WTC11 (cell line): ENCODE measurements at regions of chr1 and their contacts with region 1.

Region 1: GRCh38 chr1:223556414-223557129 is 108.9 kb downstream of the CAPN8 start:
- DNase-seq: peak; percentile 86
- ATAC-seq: peak; percentile 95
- H3K4me3 Mint-ChIP-seq: no peak overlapping the region
- H3K27ac Mint-ChIP-seq: no peak overlapping the region
- H3K4me1 Mint-ChIP-seq: no peaks in the 10 kb centered on the region
- H3K27me3 Mint-ChIP-seq: no peaks in the 10 kb centered on the region
- CTCF ChIP-seq: peak; percentile 77

Region 2: GRCh38 chr1:223363856-223364684 is 192.5 kb before region 1 on chr1 and contains the start of gene SUSD4:
- CTCF ChIA-PET with region 1: interaction called, 16 read pairs
- POLR2A ChIA-PET with region 1: no interaction called
- DNase-seq: peak; percentile 79
- ATAC-seq: peak; percentile 68
- H3K4me3 Mint-ChIP-seq: peak within 1 kb of the TSS; percentile 88
- H3K27ac Mint-ChIP-seq: no peak within 1 kb of the TSS
- H3K4me1 Mint-ChIP-seq: peaks cover 17% of the 10 kb centered on the region
- H3K27me3 Mint-ChIP-seq: peaks cover 78% of the 10 kb centered on the region
- CTCF ChIP-seq: no peak
- total RNA-seq, gene SUSD4: 1.8 to 2.6 TPM (median 2.6 TPM) in 3 replicates

Region 3: GRCh38 chr1:223531742-223532341 is 24.7 kb before region 1 on chr1:
- CTCF ChIA-PET with region 1: interaction called, 30 read pairs
- POLR2A ChIA-PET with region 1: no interaction called
- DNase-seq: peak; percentile 86
- ATAC-seq: peak; percentile 96
- H3K4me3 Mint-ChIP-seq: no peak overlapping the region
- H3K27ac Mint-ChIP-seq: no peak overlapping the region
- H3K4me1 Mint-ChIP-seq: peaks cover 10% of the 10 kb centered on the region
- H3K27me3 Mint-ChIP-seq: no peaks in the 10 kb centered on the region; the same call in 1 of the 2 replicates
- CTCF ChIP-seq: peak; percentile 62

Region 4: GRCh38 chr1:223611936-223612335 is 55.4 kb after region 1 on chr1:
- CTCF ChIA-PET with region 1: interaction called, 75 read pairs
- POLR2A ChIA-PET with region 1: interaction called, 3 read pairs
- DNase-seq: no peak
- ATAC-seq: no peak
- H3K4me3 Mint-ChIP-seq: no peak overlapping the region
- H3K27ac Mint-ChIP-seq: no peak overlapping the region
- H3K4me1 Mint-ChIP-seq: no peaks in the 10 kb centered on the region
- H3K27me3 Mint-ChIP-seq: no peaks in the 10 kb centered on the region
- CTCF ChIP-seq: no peak

Region 5: GRCh38 chr1:223628233-223629125 is 71.9 kb after region 1 on chr1:
- CTCF ChIA-PET with region 1: interaction called, 18 read pairs
- POLR2A ChIA-PET with region 1: no interaction called
- DNase-seq: peak; percentile 72
- ATAC-seq: peak; percentile 95
- H3K4me3 Mint-ChIP-seq: no peak overlapping the region
- H3K27ac Mint-ChIP-seq: no peak overlapping the region
- H3K4me1 Mint-ChIP-seq: no peaks in the 10 kb centered on the region
- H3K27me3 Mint-ChIP-seq: no peaks in the 10 kb centered on the region
- CTCF ChIP-seq: peak; percentile 89

Region 6: GRCh38 chr1:223659706-223660105 is 103.1 kb after region 1 on chr1:
- CTCF ChIA-PET with region 1: interaction called, 11 read pairs
- POLR2A ChIA-PET with region 1: no interaction called
- DNase-seq: no peak
- ATAC-seq: no peak
- H3K4me3 Mint-ChIP-seq: no peak overlapping the region
- H3K27ac Mint-ChIP-seq: no peak overlapping the region
- H3K4me1 Mint-ChIP-seq: peaks cover 13% of the 10 kb centered on the region
- H3K27me3 Mint-ChIP-seq: no peaks in the 10 kb centered on the region; the same call in 1 of the 2 replicates
- CTCF ChIP-seq: no peak

Region 7: DNA sequence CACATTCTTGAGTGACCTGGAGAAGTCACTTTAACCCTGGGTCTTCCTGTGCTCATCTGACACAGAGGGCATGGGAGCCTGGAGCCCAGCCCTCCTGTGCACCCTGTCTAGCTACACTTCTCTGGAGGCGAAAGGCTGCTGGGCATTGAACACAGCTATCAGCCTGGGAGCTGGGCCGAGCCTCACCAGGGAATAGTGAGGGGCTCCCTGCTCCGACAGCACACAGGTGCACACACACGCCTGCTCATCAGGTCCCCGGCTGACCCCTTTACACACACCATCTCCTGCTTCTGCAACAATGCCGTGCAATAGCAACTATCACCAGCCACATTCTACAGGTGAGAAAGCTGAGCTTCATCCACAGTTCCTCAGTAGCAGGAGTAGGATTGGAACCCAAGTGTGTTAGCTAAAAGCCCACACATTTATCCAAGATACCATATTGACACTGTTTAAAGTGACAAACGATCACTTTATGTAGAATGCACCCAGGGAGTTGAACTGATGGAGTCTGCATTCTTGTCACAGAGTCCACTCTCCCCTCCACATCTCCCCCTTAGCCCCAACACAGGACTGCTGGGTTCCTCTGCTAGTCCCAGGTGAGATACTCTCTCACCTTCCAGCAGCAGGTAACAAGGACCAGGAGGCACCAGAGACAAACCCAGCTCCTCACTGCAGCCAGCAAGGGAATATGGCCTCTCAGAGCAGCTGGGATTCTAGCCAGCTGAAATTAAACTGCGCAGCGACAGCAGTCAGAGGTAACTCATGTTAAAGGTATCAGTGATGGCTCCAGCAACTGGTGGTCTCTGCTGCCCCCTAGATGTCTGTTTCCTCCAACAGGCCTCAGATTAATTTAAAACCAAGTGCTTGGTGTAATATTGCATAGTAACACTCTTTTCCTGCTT is 127.3 kb after region 1 on chr1:
- CTCF ChIA-PET with region 1: interaction called, 70 read pairs
- POLR2A ChIA-PET with region 1: interaction called, 5 read pairs
- DNase-seq: peak; percentile 77
- ATAC-seq: peak; percentile 95
- H3K4me3 Mint-ChIP-seq: no peak overlapping the region
- H3K27ac Mint-ChIP-seq: no peak overlapping the region
- H3K4me1 Mint-ChIP-seq: no peaks in the 10 kb centered on the region
- H3K27me3 Mint-ChIP-seq: peaks cover 3% of the 10 kb centered on the region
- CTCF ChIP-seq: peak; percentile 75

Region 8: DNA sequence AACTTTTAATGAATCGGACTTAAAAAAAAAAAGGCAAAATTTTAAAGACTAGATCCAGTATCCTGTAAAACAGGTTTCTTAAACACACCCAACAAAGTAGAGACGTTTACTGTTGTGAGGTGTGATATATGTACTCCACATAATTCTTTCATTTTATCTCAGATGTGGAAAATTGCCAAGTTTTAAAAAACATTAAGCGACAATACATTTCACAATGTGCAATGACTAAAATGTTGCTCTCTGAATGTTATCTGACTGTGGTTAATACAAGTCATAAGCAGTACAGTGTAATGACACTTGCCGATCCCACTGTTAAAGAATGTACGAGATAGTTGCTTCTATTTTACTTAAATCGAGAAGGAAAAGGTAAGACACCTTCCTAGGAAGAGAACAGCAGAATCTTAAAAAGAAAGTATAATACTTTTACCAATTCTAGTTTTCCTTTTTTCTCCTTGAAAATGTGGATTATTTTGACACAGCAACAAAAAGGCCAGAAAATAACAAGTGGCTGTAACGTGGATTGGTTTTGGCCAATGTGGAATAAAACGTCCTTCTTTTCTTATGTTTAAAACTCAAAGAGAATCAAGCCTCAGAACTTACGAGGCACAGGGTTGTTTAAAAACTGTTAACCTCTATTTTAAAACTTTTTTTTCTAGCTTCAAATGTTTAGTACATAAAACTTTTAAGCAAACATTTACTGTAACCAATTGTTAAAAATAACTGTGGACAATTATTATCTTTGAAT is 237.7 kb after region 1 on chr1:
- CTCF ChIA-PET with region 1: no interaction called
- POLR2A ChIA-PET with region 1: no interaction called
- DNase-seq: no peak
- ATAC-seq: no peak
- H3K4me3 Mint-ChIP-seq: no peak overlapping the region
- H3K27ac Mint-ChIP-seq: no peak overlapping the region
- H3K4me1 Mint-ChIP-seq: no peaks in the 10 kb centered on the region
- H3K27me3 Mint-ChIP-seq: no peaks in the 10 kb centered on the region
- CTCF ChIP-seq: no peak